Activated CD4-positive, alpha-beta T cell treated with anti-CD3 and anti-CD28 coated beads, Interleukin-2, amount 10 ng/mL, durations not matched to agents 24 days and 14 days (primary cell): ENCODE measurements at regions of chr17 and their contacts with region 1.

Region 1: GRCh38 chr17:36072431-36073121 is 8.5 kb downstream of the CCL18 start:
- DNase-seq: peak; percentile 87
- H3K4me3 Mint-ChIP-seq: no peak overlapping the region
- H3K27ac Mint-ChIP-seq: no peak overlapping the region
- H3K4me1 Mint-ChIP-seq: peaks cover 12% of the 10 kb centered on the region
- H3K27me3 Mint-ChIP-seq: peaks cover 11% of the 10 kb centered on the region

Region 2: DNA sequence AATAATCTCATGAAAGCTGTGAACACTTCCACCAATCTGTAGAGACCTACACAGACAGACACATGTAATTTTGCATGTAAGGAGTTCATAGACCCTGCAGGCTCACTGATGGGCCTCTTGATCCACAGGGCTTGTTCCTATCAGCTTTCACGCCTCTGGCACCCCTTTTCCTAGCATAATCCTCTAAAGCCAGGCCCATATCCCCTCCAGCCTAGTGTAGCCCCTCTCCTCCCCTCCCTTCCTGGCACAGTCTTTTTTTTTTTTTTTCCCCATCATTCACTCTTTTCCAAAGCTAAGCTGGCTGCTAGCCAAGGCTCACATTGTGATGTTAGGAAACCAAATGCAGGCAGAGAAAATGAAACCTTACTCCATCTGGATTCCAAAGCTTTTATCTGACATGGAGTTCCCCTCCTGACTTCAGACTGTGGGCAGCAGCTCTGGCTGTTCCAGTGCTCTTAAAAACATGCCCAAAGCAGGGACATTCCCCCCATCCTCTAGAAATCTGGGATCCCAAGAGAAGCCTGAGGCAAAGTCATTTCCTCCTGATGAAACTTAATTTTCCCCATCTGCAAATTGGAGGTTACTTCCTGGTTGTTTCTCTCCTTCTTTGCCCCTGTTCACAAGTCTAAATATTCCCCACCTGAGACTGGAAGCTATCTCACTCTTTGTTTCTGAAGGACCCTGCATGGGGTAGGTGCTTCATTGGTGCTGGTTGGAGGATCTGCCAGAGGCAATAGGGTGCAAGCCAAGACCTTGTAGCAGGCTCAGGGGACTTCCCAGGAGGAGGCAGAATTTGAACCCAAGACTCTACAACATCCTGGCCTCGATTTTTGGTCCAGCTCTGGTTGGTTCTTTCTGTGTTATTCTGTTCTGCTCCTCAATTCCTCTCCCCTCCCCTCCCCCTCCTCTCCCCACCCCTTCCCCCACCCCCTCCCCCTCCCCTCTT is 182.5 kb before region 1 on chr17:
- intact Hi-C with region 1: loop called (anchors 10 kb)
- DNase-seq: peak; percentile 69
- H3K4me3 Mint-ChIP-seq: peak overlapping the region; percentile 44
- H3K27ac Mint-ChIP-seq: peak overlapping the region; percentile 77
- H3K4me1 Mint-ChIP-seq: peaks cover 47% of the 10 kb centered on the region
- H3K27me3 Mint-ChIP-seq: no peaks in the 10 kb centered on the region

Region 3: GRCh38 chr17:35969558-35970380 is 102.8 kb before region 1 on chr17:
- intact Hi-C with region 1: loop called (anchors 1 kb)
- DNase-seq: peak; percentile 92
- H3K4me3 Mint-ChIP-seq: no peak overlapping the region
- H3K27ac Mint-ChIP-seq: no peak overlapping the region
- H3K4me1 Mint-ChIP-seq: peaks cover 5% of the 10 kb centered on the region
- H3K27me3 Mint-ChIP-seq: peaks cover 3% of the 10 kb centered on the region

Region 4: GRCh38 chr17:36030956-36031355 is 41.6 kb before region 1 on chr17:
- intact Hi-C with region 1: no loop called
- DNase-seq: no peak
- H3K4me3 Mint-ChIP-seq: no peak overlapping the region
- H3K27ac Mint-ChIP-seq: no peak overlapping the region
- H3K4me1 Mint-ChIP-seq: no peaks in the 10 kb centered on the region
- H3K27me3 Mint-ChIP-seq: peaks cover 37% of the 10 kb centered on the region

Region 5: GRCh38 chr17:36089888-36090836 is 17.6 kb after region 1 on chr17 and contains the start of gene CCL3:
- intact Hi-C with region 1: loop called (anchors 1 kb)
- DNase-seq: peak; percentile 71
- H3K4me3 Mint-ChIP-seq: peak within 1 kb of the TSS; percentile 55
- H3K27ac Mint-ChIP-seq: peak within 1 kb of the TSS; percentile 90
- H3K4me1 Mint-ChIP-seq: peaks cover 42% of the 10 kb centered on the region
- H3K27me3 Mint-ChIP-seq: peaks cover 15% of the 10 kb centered on the region
- total RNA-seq, gene CCL3: 403 and 414 TPM in 2 replicates

Region 6: GRCh38 chr17:36117505-36118382 is 45.2 kb after region 1 on chr17:
- intact Hi-C with region 1: loop called (anchors 5 kb)
- DNase-seq: no peak
- H3K4me3 Mint-ChIP-seq: no peak overlapping the region
- H3K27ac Mint-ChIP-seq: peak overlapping the region; percentile 81
- H3K4me1 Mint-ChIP-seq: peaks cover 13% of the 10 kb centered on the region
- H3K27me3 Mint-ChIP-seq: no peaks in the 10 kb centered on the region

Region 7: GRCh38 chr17:36148559-36149295 is 76.2 kb after region 1 on chr17:
- intact Hi-C with region 1: loop called (anchors 2 kb)
- DNase-seq: peak; percentile 90
- H3K4me3 Mint-ChIP-seq: no peak overlapping the region
- H3K27ac Mint-ChIP-seq: no peak overlapping the region
- H3K4me1 Mint-ChIP-seq: peaks cover 2% of the 10 kb centered on the region
- H3K27me3 Mint-ChIP-seq: peaks cover 33% of the 10 kb centered on the region